Right cardiac atrium (tissue), 5 donors: ENCODE measurements at regions of chr7 and their contacts with region 1.

Region 1: GRCh38 chr7:44587843-44588711 is 6.0 kb upstream of the TMED4 start:
- DNase-seq: no peak
- ATAC-seq: peak in 1 of 2 donors; percentile 66
- H3K4me3 ChIP-seq: no peak overlapping the region
- H3K27ac ChIP-seq: no peak overlapping the region
- H3K4me1 ChIP-seq: peaks cover 2% of the 10 kb centered on the region
- H3K27me3 ChIP-seq: no peaks in the 10 kb centered on the region

Region 2: GRCh38 chr7:44477063-44477830 is 110.8 kb before region 1 on chr7:
- intact Hi-C with region 1: no loop called
- DNase-seq: peak; percentile 55 to 72 (median 59)
- ATAC-seq: peak; percentile 77 to 87
- H3K4me3 ChIP-seq: no peak overlapping the region
- H3K27ac ChIP-seq: peak overlapping the region; percentile 87
- H3K4me1 ChIP-seq: peaks cover 15% of the 10 kb centered on the region
- H3K27me3 ChIP-seq: no peaks in the 10 kb centered on the region

Region 3: GRCh38 chr7:44914992-44915607 is 327.0 kb after region 1 on chr7:
- intact Hi-C with region 1: loop called (anchors 5 to 10 kb)
- DNase-seq: no peak
- ATAC-seq: no peak
- H3K4me3 ChIP-seq: no peak overlapping the region
- H3K27ac ChIP-seq: no peak overlapping the region
- H3K4me1 ChIP-seq: no peaks in the 10 kb centered on the region
- H3K27me3 ChIP-seq: no peaks in the 10 kb centered on the region

Region 4: GRCh38 chr7:45033931-45034290 is 445.8 kb after region 1 on chr7:
- intact Hi-C with region 1: no loop called
- DNase-seq: peak in 2 of 3 donors; percentile 39 to 65
- ATAC-seq: peak; percentile 49 to 74
- H3K4me3 ChIP-seq: no peak overlapping the region
- H3K27ac ChIP-seq: no peak overlapping the region
- H3K4me1 ChIP-seq: peaks cover 2% of the 10 kb centered on the region
- H3K27me3 ChIP-seq: no peaks in the 10 kb centered on the region